ENCODE measurements at regions of chr2 and their contacts with region 1.

Region 1: GRCh38 chr2:69095305-69095704 is 82.3 kb downstream of the ANTXR1 start:
- DNase-seq: peak; percentile 94
- ATAC-seq: peak; percentile 93
- H3K4me3 ChIP-seq: no peak overlapping the region
- H3K27ac ChIP-seq: peak overlapping the region; percentile 67; the same call in 1 of the 2 replicates
- H3K4me1 ChIP-seq: peaks cover 9% of the 10 kb centered on the region
- H3K27me3 ChIP-seq: no peaks in the 10 kb centered on the region
- CTCF ChIP-seq: no peak
- POLR2A ChIP-seq: no peak
- RAD21 ChIP-seq: no peak

Region 2: DNA sequence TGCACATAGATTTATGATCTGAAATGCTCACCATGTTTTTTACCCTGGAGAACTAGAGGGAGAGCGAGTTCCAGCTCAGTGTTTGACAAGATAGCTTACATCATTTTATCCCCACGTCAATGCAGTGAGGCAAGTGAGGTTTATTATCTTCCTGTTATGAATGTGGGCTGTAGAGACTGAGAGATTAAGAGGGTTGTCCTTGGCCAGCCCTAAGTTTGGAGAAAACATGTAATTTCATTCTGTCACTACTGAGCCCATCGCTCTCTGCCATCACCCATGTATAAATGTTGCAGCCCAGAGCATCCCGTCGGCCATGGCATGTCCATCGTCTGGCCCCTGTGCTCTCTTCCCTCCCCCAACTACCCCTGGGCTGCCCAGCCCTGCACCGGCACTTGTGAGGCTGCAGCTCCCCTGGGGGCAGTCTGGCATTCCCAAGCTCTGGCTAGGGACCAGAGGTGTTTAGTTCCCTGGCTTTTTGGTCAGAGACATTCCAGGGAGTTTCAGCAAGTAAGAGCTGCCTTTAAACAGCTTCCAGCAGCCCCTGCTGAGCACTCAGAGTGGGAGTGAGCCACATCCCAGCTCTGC is 54.4 kb after region 1 on chr2:
- CTCF ChIA-PET with region 1: no interaction called
- POLR2A ChIA-PET with region 1: no interaction called
- dilution Hi-C with region 1: no loop called
- in situ Hi-C with region 1: no loop called
- intact Hi-C with region 1: loop called (anchors 5 kb)
- DNase-seq: peak; percentile 68
- ATAC-seq: peak; percentile 50
- H3K4me3 ChIP-seq: no peak overlapping the region
- H3K27ac ChIP-seq: no peak overlapping the region
- H3K4me1 ChIP-seq: peaks cover 27% of the 10 kb centered on the region
- H3K27me3 ChIP-seq: no peaks in the 10 kb centered on the region
- CTCF ChIP-seq: 0 out of 2 replicates have a peak, but pooled peaks have one; percentile 3
- POLR2A ChIP-seq: no peak
- RAD21 ChIP-seq: no peak

Measured in IMR-90 (cell line).